A549 (cell line): ENCODE measurements at regions of chr17 and their contacts with region 1.

Region 1: GRCh38 chr17:44110823-44111633 is 12.4 kb downstream of the HDAC5 start:
- DNase-seq: peak; percentile 86
- ATAC-seq: peak; percentile 60 to 75
- H3K4me3 ChIP-seq: 0 out of 3 replicates have a peak overlapping the region, but pooled peaks have one; percentile 1
- H3K27ac ChIP-seq: peak overlapping the region; percentile 65 to 86
- H3K4me1 ChIP-seq: peaks cover 59% of the 10 kb centered on the region
- CTCF ChIP-seq: no peak
- EP300 ChIP-seq: peak in 1 of 2 experiments; percentile 37; a peak in 2 of 5 replicates
- POLR2A ChIP-seq: no peak
- RAD21 ChIP-seq: peak in 1 of 2 experiments; percentile 37; a peak in 1 of 5 replicates

Region 2: DNA sequence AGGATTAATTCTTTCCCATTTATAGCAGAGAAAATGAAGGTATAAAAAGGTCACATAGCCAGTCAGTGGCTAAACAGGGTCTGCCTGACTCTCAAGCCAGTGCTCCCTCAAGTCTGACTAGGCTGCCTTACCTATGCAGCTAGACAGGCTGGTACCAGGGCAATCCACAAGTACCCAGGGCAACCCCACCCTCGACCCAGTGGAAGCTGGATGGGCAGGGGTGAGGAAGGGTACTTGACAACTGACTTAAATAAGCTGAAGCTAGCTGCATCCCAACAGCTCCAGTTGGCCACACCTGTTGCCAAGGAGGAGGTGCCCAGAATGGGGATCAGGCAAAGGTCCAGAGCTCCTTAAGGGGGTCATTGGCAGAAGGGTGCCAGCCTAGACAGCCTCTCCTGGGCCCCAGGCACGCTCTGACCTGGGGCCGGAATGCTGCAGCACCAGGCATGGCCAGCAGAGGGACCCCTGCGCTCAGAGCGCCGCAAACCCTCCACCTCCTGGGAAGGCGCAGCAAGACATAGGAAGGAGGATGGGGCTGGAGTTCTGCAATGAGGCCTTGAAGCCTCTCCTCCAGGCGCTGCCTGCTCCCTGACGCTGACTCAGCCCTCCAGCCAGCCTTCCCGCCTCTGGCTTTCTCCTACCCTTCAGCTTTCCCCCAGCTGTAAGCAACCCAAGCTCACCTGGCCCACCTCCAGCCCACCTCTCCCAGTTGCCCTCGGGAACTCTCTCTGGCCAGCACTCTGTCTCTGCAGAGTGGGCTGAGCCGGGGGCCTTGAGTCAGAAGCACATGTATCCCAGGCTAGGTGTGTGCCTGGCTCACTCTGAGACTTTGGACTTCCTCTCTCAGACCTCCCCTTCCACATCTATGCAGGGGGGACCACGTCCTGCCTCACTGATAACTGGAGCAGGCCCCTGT is 232.5 kb before region 1 on chr17:
- CTCF ChIA-PET with region 1: interaction called, 17 read pairs
- POLR2A ChIA-PET with region 1: no interaction called
- DNase-seq: peak; percentile 87 to 98
- ATAC-seq: peak; percentile 83 to 94
- H3K4me3 ChIP-seq: no peak overlapping the region
- H3K27ac ChIP-seq: peak overlapping the region; percentile 33 to 54; a peak in 4 of 6 replicates
- H3K4me1 ChIP-seq: peaks cover 5% of the 10 kb centered on the region
- CTCF ChIP-seq: peak; percentile 96
- EP300 ChIP-seq: no peak
- POLR2A ChIP-seq: no peak
- RAD21 ChIP-seq: peak; percentile 85 to 88

Region 3: DNA sequence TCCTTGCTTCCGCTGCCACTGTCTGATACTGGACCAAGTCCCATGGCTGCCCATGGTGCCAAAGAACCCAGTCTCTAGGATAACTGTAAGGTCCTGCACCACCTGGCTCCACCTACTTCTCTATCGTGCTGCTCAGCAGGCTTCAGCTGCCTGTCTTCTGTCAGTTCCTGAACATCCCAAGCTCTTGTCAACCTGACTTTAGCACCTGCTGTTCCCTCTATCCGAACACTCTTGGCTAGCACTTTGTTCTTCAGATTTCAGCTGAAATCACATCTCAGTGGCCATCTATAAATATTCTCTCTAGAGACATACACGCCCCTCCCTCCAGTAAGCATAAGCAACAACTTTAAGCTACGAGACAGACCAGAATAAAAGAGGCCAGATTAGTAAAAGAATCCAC is 81.3 kb before region 1 on chr17:
- CTCF ChIA-PET with region 1: interaction called, 26 read pairs
- POLR2A ChIA-PET with region 1: interaction called, 4 read pairs
- DNase-seq: no peak
- ATAC-seq: no peak; a peak in 1 of 6 replicates
- H3K4me3 ChIP-seq: no peak overlapping the region
- H3K27ac ChIP-seq: no peak overlapping the region
- H3K4me1 ChIP-seq: no peaks in the 10 kb centered on the region
- CTCF ChIP-seq: no peak
- EP300 ChIP-seq: no peak
- POLR2A ChIP-seq: no peak
- RAD21 ChIP-seq: no peak

Region 4: DNA sequence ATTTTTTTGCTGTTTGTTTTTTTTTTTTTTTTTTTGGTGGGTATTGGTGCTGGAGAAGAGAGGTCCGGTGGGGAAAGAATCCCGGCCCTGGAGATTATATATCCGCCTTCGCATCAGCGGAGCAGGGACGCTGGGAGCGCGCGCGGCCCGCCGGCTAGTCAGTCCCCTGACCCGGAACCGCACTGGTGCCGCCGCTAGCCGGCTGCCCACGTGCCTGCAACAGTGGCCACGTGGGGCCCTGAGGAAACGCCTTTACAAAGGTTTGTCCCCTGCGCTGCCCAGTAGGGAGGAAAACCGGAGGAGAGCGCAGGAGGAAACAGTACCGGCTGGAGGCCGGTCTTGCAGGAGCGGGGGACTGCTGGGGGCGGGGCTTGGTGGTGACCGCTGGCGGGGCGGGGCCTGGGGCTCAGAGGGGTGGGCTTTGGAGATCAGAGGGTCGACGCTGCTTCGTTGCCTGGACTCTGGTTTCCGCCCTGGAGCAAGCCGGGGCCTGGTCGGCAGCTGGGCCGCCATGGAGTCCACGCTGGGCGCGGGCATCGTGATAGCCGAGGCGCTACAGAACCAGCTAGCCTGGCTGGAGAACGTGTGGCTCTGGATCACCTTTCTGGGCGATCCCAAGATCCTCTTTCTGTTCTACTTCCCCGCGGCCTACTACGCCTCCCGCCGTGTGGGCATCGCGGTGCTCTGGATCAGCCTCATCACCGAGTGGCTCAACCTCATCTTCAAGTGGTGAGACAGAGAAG is 40.4 kb before region 1 on chr17 and contains the start of gene G6PC3:
- CTCF ChIA-PET with region 1: interaction called, 67 read pairs
- POLR2A ChIA-PET with region 1: interaction called, 16 read pairs
- DNase-seq: peak; percentile 99 to 100
- ATAC-seq: peak; percentile 80 to 92
- H3K4me3 ChIP-seq: peak within 1 kb of the TSS; percentile 69
- H3K27ac ChIP-seq: peak within 1 kb of the TSS; percentile 92 to 93
- H3K4me1 ChIP-seq: peaks cover 19% of the 10 kb centered on the region
- CTCF ChIP-seq: no peak
- EP300 ChIP-seq: no peak
- POLR2A ChIP-seq: peak; percentile 97
- RAD21 ChIP-seq: peak; percentile 4 to 43; a peak in 3 of 5 replicates
- polyA plus RNA-seq, gene G6PC3: 104 TPM in 2 replicates

Region 5: GRCh38 chr17:44095642-44096496 is 15.2 kb before region 1 on chr17:
- CTCF ChIA-PET with region 1: interaction called, 1,202 read pairs
- POLR2A ChIA-PET with region 1: interaction called, 16 read pairs
- DNase-seq: peak; percentile 88 to 94
- ATAC-seq: peak; percentile 85 to 87
- H3K4me3 ChIP-seq: peak overlapping the region; percentile 30
- H3K27ac ChIP-seq: peak overlapping the region; percentile 92 to 94
- H3K4me1 ChIP-seq: peaks cover 32% of the 10 kb centered on the region
- CTCF ChIP-seq: no peak; the same call in 2 of the 3 replicates
- EP300 ChIP-seq: no peak
- POLR2A ChIP-seq: peak; percentile 61
- RAD21 ChIP-seq: peak in 1 of 2 experiments; percentile 40; a peak in 3 of 5 replicates

Region 6: DNA sequence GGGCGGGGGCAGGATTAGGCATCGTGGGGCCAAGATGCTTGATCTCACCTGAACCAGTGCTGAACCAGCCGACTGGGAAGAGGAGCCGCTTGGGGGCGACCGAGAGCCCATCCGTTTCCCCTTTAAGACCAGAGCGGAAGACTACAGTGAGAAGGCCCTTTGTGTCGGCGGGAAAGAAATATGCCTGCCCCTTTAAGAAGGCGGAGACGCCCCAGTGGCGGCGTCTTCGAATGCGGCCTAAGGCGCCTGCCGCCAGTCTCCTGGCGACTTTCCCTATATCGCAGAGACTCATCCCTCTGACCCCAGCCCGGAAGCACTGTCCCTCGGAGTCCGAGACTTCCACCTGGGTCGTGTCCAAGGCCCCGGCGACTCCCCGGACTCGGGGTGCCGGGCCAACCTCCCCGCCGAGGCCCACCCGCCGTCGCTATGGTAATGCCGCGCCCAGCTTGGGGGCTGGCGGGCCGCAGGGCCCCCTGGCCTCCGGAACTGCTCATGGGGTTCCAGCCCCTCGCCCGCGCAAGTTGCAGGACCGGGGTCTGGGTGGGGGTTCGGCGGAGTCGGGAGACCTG is 30.8 kb after region 1 on chr17 and contains the start of gene HROB:
- CTCF ChIA-PET with region 1: interaction called, 163 read pairs
- POLR2A ChIA-PET with region 1: interaction called, 8 read pairs
- DNase-seq: peak; percentile 94 to 99
- ATAC-seq: peak; percentile 74 to 83
- H3K4me3 ChIP-seq: peak within 1 kb of the TSS; percentile 88
- H3K27ac ChIP-seq: peak within 1 kb of the TSS; percentile 83 to 93
- H3K4me1 ChIP-seq: peaks cover 32% of the 10 kb centered on the region
- CTCF ChIP-seq: peak; percentile 92
- EP300 ChIP-seq: no peak
- POLR2A ChIP-seq: no peak
- RAD21 ChIP-seq: peak; percentile 62 to 70
- polyA plus RNA-seq, gene HROB: 5.4 and 5.6 TPM in 2 replicates

Region 7: DNA sequence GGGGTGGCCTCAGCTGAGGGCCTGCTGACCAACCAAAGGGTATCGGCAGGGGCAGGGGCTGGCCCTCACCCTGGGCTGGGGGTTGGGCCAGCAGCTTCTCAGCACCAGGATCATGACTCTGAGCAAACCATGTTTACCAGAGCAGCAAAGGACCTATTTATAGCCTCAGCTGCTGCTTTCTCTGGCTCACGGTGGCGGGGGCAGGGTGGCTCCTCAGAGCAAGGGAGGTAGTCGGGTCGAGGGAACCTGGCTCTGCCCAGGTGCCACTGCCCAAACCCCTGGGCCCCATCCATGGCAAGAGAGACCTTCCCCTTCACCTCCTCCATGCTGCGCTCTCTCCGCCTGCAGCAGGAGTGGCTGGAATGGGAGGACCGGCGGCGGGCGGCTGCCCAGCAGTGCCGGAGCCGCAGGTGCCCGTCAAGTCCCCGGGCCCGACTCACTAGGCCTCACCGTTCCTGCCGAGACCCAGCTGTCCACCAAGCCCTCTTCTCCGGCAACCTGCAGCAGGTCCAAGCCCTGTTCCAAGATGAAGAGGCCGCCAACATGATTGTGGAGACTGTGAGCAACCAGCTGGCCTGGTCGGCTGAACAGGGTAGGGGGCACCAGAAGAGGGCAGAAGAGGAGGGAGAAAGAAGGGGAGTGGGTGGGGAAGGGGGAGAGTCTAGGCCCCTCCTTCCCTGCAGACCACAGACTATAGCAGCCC is 59.6 kb after region 1 on chr17 and contains the start of gene ASB16:
- CTCF ChIA-PET with region 1: interaction called, 20 read pairs
- POLR2A ChIA-PET with region 1: no interaction called
- DNase-seq: no peak
- ATAC-seq: peak; percentile 9 to 11; a peak in 4 of 6 replicates
- H3K4me3 ChIP-seq: no peak within 1 kb of the TSS
- H3K27ac ChIP-seq: peak within 1 kb of the TSS in 1 of 2 experiments; percentile 1; a peak in 2 of 6 replicates
- H3K4me1 ChIP-seq: peaks cover 16% of the 10 kb centered on the region
- CTCF ChIP-seq: no peak
- EP300 ChIP-seq: no peak
- POLR2A ChIP-seq: no peak
- RAD21 ChIP-seq: no peak
- polyA plus RNA-seq, gene ASB16: 0.05 TPM in 1 of 2 replicates, not detected in the other